Heart left ventricle (tissue), 16 donors: ENCODE measurements at regions of chr17 and their contacts with region 1.

Region 1: GRCh38 chr17:27353461-27354050 is 59.6 kb downstream of the WSB1 start:
- DNase-seq: peak; percentile 95 to 97 (median 95)
- ATAC-seq: peak; percentile 92 to 97 (median 94)
- H3K4me3 ChIP-seq: peak overlapping the region; percentile 46 to 90 (median 66)
- H3K27ac ChIP-seq: peak overlapping the region; percentile 80 to 99 (median 96)
- H3K4me1 ChIP-seq: peaks cover 0 to 32% (median 21%) of the 10 kb centered on the region in 12 donors
- H3K27me3 ChIP-seq: no peaks in the 10 kb centered on the region
- CTCF ChIP-seq: peak; percentile 64 to 99 (median 98)
- POLR2A ChIP-seq: peak in 1 of 2 donors; percentile 81

Region 2: GRCh38 chr17:27332485-27333409 is 20.8 kb before region 1 on chr17:
- intact Hi-C with region 1: loop called in 2 of 10 experiments (anchors 1 to 2 kb)
- DNase-seq: peak; percentile 98 to 100 (median 99)
- ATAC-seq: peak; percentile 95 to 97 (median 96)
- H3K4me3 ChIP-seq: peak overlapping the region in 11 of 12 donors; percentile 29 to 69 (median 57)
- H3K27ac ChIP-seq: peak overlapping the region; percentile 92 to 99 (median 96)
- H3K4me1 ChIP-seq: peaks cover 0 to 35% (median 19%) of the 10 kb centered on the region in 12 donors
- H3K27me3 ChIP-seq: no peaks in the 10 kb centered on the region
- CTCF ChIP-seq: peak; percentile 82 to 99 (median 93)
- POLR2A ChIP-seq: peak in 1 of 2 donors; percentile 48

Region 3: GRCh38 chr17:27381007-27381501 is 27.5 kb after region 1 on chr17:
- intact Hi-C with region 1: loop called in 2 of 10 experiments (anchors 2 kb)
- DNase-seq: peak; percentile 73 to 89 (median 75)
- ATAC-seq: peak; percentile 24 to 76 (median 68)
- H3K4me3 ChIP-seq: peak overlapping the region in 3 of 12 donors; percentile 36 to 41 (median 40)
- H3K27ac ChIP-seq: peak overlapping the region in 1 of 12 donors; percentile 73
- H3K4me1 ChIP-seq: peaks cover 0 to 31% (median 20%) of the 10 kb centered on the region in 12 donors
- H3K27me3 ChIP-seq: no peaks in the 10 kb centered on the region
- CTCF ChIP-seq: peak; percentile 74 to 95 (median 86)
- POLR2A ChIP-seq: no peak

Region 4: GRCh38 chr17:27430882-27431491 is 77.4 kb after region 1 on chr17:
- intact Hi-C with region 1: loop called in 2 of 10 experiments (anchors 1 to 2 kb)
- DNase-seq: peak in 1 of 5 donors; percentile 25
- ATAC-seq: peak in 3 of 4 donors; percentile 64 to 66 (median 65)
- H3K4me3 ChIP-seq: no peak overlapping the region
- H3K27ac ChIP-seq: no peak overlapping the region
- H3K4me1 ChIP-seq: no peaks in the 10 kb centered on the region
- H3K27me3 ChIP-seq: no peaks in the 10 kb centered on the region
- CTCF ChIP-seq: peak; percentile 33 to 59 (median 44)
- POLR2A ChIP-seq: no peak

Region 5: DNA sequence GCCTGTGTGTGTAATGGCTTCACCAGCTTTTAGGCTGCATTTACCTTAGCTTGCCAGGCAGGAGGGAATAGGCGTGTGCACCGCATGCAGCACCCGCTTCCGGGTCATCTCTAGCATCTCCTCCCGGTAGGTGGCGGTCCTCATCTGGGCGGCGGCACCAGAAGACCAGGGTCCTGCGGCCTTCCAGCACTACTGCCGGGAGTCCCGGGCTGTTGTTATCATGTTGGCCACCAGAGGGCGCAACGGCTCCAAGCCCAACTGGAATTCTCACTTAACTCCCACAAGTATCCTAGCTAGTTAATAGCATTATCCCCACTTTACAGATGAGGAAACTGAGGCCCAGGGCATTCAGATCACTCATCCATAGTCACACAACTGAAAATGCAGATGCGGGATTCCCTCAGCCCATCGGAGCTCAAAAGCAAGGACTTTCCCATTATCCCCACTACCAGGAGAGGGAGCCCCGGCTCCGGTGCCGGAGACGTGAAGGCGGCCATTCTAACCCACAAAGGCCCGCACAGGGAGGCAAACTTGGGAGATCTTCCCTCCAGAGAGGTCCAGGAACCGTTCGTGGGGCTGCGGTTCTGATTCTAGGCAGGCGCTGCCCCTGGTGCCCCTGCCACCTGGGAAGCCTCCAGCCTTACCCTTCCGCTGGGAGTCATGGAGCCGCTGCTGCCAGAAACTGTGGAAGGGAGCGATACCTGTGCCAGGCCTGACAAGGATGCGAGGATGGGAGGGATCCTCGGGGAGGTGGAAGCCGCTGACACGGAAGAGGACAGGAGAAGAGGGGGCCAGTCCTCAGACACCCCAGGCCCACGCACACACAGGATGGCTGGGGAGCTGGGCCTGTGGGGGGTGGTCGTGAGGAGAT is 301.3 kb after region 1 on chr17:
- intact Hi-C with region 1: loop called in 3 of 10 experiments (anchors 5 to 10 kb)
- DNase-seq: peak; percentile 50 to 82 (median 69)
- ATAC-seq: peak in 3 of 4 donors; percentile 35 to 46 (median 40)
- H3K4me3 ChIP-seq: no peak overlapping the region
- H3K27ac ChIP-seq: no peak overlapping the region
- H3K4me1 ChIP-seq: peaks cover 0 to 5% (median 0%) of the 10 kb centered on the region in 12 donors
- H3K27me3 ChIP-seq: no peaks in the 10 kb centered on the region
- CTCF ChIP-seq: peak; percentile 83 to 99 (median 92)
- POLR2A ChIP-seq: no peak